ENCODE measurements at regions of chr3 and their contacts with region 1.

Region 1: GRCh38 chr3:4834403-4834866 is 144.8 kb upstream of the BHLHE40 start:
- DNase-seq: peak; percentile 90
- H3K4me3 Mint-ChIP-seq: peak overlapping the region; percentile 49
- H3K27ac Mint-ChIP-seq: peak overlapping the region; percentile 84
- H3K4me1 Mint-ChIP-seq: peaks cover 86% of the 10 kb centered on the region
- H3K27me3 Mint-ChIP-seq: no peaks in the 10 kb centered on the region

Region 2: GRCh38 chr3:4426601-4427344 is 407.7 kb before region 1 on chr3:
- CTCF ChIA-PET with region 1: no interaction called
- POLR2A ChIA-PET with region 1: no interaction called
- intact Hi-C with region 1: loop called (anchors 5 kb)
- DNase-seq: no peak
- H3K4me3 Mint-ChIP-seq: no peak overlapping the region
- H3K27ac Mint-ChIP-seq: no peak overlapping the region
- H3K4me1 Mint-ChIP-seq: peaks cover 33% of the 10 kb centered on the region
- H3K27me3 Mint-ChIP-seq: no peaks in the 10 kb centered on the region

Region 3: DNA sequence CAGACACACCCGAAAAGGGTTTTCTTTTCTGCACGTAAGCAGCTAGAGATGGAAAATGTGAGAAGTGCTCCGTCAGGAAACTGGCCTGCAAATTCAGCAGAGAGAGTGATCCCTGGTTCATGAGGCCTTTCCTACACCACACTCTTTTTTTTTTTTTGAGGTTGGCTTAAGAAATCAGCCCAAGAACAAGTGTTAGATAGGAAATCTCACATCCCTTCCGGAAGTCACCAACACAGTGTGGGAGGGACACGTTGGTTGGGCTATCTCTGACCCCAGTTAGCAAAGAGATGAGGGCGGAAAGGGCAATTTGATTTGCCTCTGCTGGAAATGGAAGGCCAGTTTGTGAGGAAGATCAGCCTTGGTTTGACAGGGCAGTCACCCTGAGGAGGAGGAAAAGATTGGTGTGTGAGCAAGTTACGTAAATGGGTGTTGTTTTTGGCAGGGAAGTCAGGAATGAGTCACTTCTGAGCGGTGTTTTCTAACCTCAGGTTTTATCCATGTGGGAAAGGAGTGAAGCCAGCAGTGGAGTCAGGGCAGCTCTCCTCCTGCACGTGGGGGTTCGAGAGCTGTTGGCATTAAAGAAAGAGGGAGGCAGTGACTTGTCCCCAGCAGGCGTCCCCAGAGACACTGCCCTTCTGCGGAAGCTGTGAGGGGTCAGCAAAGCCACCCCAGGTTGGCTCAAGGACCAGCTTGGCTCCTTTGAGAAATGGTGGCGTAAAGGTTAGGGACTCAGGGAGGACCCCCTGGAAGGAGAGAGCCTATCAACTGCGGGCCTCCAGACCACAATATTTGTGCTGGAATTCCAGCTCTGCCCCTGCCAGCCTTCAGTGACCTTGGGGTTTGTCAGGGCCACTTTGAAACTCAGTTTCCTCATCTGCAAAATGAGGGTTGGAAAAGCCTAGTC is 92.8 kb before region 1 on chr3:
- CTCF ChIA-PET with region 1: no interaction called
- POLR2A ChIA-PET with region 1: no interaction called
- intact Hi-C with region 1: loop called (anchors 1 kb)
- DNase-seq: peak; percentile 52
- H3K4me3 Mint-ChIP-seq: peak overlapping the region; percentile 3
- H3K27ac Mint-ChIP-seq: peak overlapping the region; percentile 85
- H3K4me1 Mint-ChIP-seq: peaks cover 51% of the 10 kb centered on the region
- H3K27me3 Mint-ChIP-seq: no peaks in the 10 kb centered on the region

Region 4: DNA sequence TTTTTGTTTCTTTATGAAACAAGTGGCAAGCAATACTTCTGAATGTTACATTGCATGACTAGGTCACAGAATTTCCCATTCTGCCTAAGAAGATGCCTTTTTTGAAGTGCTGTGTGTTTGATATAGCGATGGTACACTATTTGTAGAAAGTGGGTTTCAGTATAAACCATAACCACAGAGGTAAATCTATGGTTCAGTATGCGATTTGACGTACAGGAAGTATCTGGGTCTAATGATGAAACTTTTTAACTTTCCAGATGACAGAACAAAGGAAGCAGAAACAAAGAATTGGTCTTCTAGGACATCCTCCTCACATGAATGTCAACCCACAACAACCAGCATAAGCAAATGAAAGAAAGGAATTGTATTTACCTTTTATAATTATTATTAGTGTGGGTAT is 11.4 kb after region 1 on chr3:
- CTCF ChIA-PET with region 1: interaction called, 20 read pairs
- POLR2A ChIA-PET with region 1: interaction called, 57 read pairs
- intact Hi-C with region 1: loop called (anchors 1 kb)
- DNase-seq: no peak
- H3K4me3 Mint-ChIP-seq: peak overlapping the region; percentile 14
- H3K27ac Mint-ChIP-seq: peak overlapping the region; percentile 83
- H3K4me1 Mint-ChIP-seq: peaks cover 96% of the 10 kb centered on the region
- H3K27me3 Mint-ChIP-seq: no peaks in the 10 kb centered on the region

Region 5: DNA sequence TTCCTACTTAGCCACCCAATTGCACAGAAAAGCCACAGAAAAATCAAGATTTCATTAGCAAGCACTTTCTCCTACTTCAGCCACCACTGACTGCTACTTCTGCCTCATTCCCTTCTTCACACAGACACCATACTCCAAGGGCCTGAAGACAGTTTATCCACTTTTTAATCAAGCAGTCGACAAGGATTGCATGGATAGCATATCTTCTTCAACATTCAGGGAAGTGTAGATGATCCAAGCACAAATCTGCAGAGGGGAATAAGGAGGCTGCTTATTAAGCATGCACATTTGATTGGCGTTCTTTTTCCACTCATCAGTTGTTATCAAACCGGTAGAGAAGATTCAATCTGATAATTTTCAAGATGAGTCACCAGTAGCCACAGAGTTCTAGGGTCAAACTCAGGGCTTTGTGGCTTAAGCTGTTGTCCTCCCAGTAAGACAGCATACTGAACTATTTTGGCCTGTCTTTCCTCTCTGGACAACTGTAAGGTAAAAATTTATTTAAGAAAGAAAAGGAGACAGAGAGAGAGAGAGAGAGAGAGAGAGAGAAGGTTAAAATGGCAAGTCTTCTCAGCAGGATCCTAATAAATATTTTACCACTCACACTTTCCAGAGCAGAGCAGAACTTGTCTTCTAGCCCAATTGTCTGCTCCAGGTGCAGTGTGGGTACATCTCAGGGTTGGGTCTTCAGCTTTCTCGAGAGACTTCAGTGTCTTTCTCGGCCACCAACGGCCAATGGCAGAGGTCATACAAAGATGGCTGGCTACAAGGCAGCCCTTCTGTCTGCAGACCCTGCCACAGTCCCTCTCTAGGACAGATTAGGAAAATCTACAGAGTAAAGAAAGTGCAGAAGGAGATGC is 64.2 kb after region 1 on chr3:
- CTCF ChIA-PET with region 1: interaction called, 3 read pairs
- POLR2A ChIA-PET with region 1: no interaction called
- intact Hi-C with region 1: loop called (anchors 2 kb)
- DNase-seq: peak; percentile 25
- H3K4me3 Mint-ChIP-seq: peak overlapping the region; percentile 51
- H3K27ac Mint-ChIP-seq: peak overlapping the region; percentile 79
- H3K4me1 Mint-ChIP-seq: peaks cover 52% of the 10 kb centered on the region
- H3K27me3 Mint-ChIP-seq: no peaks in the 10 kb centered on the region

Region 6: GRCh38 chr3:5194341-5195159 is 360.1 kb after region 1 on chr3:
- CTCF ChIA-PET with region 1: no interaction called
- POLR2A ChIA-PET with region 1: no interaction called
- intact Hi-C with region 1: loop called (anchors 2 kb)
- DNase-seq: peak; percentile 62
- H3K4me3 Mint-ChIP-seq: peak overlapping the region; percentile 66
- H3K27ac Mint-ChIP-seq: peak overlapping the region; percentile 98
- H3K4me1 Mint-ChIP-seq: peaks cover 85% of the 10 kb centered on the region
- H3K27me3 Mint-ChIP-seq: no peaks in the 10 kb centered on the region